Transverse colon (tissue), 4 donors: ENCODE measurements at regions of chr18 and their contacts with region 1.

Region 1: GRCh38 chr18:77000527-77000926 is 132.1 kb downstream of the MBP start:
- DNase-seq: peak; percentile 59
- H3K4me3 ChIP-seq: peak overlapping the region in 1 of 4 donors; percentile 25
- H3K27ac ChIP-seq: no peak overlapping the region
- H3K4me1 ChIP-seq: peaks cover 0 to 6% (median 2%) of the 10 kb centered on the region in 4 donors
- H3K27me3 ChIP-seq: no peaks in the 10 kb centered on the region
- CTCF ChIP-seq: peak; percentile 93 to 99 (median 97)
- EP300 ChIP-seq: no peak
- POLR2A ChIP-seq: no peak

Region 2: GRCh38 chr18:76410660-76411417 is 589.7 kb before region 1 on chr18:
- in situ Hi-C with region 1: no loop called
- intact Hi-C with region 1: loop called (anchors 5 kb)
- DNase-seq: no peak
- H3K4me3 ChIP-seq: no peak overlapping the region
- H3K27ac ChIP-seq: no peak overlapping the region
- H3K4me1 ChIP-seq: peaks cover 0 to 15% (median 4%) of the 10 kb centered on the region in 4 donors
- H3K27me3 ChIP-seq: no peaks in the 10 kb centered on the region
- CTCF ChIP-seq: no peak
- EP300 ChIP-seq: no peak
- POLR2A ChIP-seq: no peak

Region 3: GRCh38 chr18:76953583-76954233 is 46.8 kb before region 1 on chr18:
- in situ Hi-C with region 1: no loop called
- intact Hi-C with region 1: no loop called
- DNase-seq: peak; percentile 62
- H3K4me3 ChIP-seq: no peak overlapping the region
- H3K27ac ChIP-seq: peak overlapping the region in 3 of 4 donors; percentile 31 to 67 (median 46)
- H3K4me1 ChIP-seq: peaks cover 0 to 13% (median 10%) of the 10 kb centered on the region in 4 donors
- H3K27me3 ChIP-seq: no peaks in the 10 kb centered on the region
- CTCF ChIP-seq: no peak
- EP300 ChIP-seq: no peak
- POLR2A ChIP-seq: no peak

Region 4: DNA sequence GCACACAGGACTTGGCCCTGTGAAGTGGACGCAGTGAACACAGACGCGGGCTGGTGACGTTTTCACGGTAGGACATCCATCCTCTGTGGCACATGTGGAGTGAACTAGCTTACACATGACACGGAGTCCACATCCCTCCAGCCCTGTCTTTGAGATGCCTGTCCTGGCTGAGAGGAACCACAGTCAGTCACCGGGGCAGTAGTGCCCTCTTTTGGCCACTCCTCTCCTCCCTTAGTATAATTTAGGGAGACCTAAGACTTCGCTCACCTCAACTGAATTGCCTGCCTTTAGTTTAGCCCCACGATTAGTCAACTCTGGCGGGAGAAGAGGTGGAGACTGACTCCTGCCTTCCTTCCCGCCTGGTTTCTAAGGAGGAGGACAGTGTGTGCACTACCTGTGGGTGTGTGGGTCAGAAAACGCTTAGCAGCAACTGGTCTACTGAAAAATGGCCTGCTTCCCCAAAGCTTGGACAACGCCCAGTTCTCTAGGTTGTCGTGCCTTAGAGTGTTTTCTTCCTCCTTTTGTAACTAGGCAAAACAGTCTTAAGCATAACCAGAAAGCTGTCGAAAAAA is 61.5 kb after region 1 on chr18:
- in situ Hi-C with region 1: loop called in 1 of 4 experiments (anchors 10 kb)
- intact Hi-C with region 1: loop called (anchors 2 kb)
- DNase-seq: no peak
- H3K4me3 ChIP-seq: no peak overlapping the region
- H3K27ac ChIP-seq: peak overlapping the region; percentile 41 to 74 (median 46)
- H3K4me1 ChIP-seq: peaks cover 10 to 51% (median 13%) of the 10 kb centered on the region in 4 donors
- H3K27me3 ChIP-seq: no peaks in the 10 kb centered on the region
- CTCF ChIP-seq: no peak
- EP300 ChIP-seq: no peak
- POLR2A ChIP-seq: no peak

Region 5: GRCh38 chr18:77067291-77068061 is 66.9 kb after region 1 on chr18:
- in situ Hi-C with region 1: loop called in 1 of 4 experiments (anchors 10 kb)
- intact Hi-C with region 1: no loop called
- DNase-seq: peak; percentile 63
- H3K4me3 ChIP-seq: no peak overlapping the region
- H3K27ac ChIP-seq: peak overlapping the region; percentile 60 to 72 (median 70)
- H3K4me1 ChIP-seq: peaks cover 15 to 73% (median 18%) of the 10 kb centered on the region in 4 donors
- H3K27me3 ChIP-seq: no peaks in the 10 kb centered on the region
- CTCF ChIP-seq: no peak
- EP300 ChIP-seq: no peak
- POLR2A ChIP-seq: no peak

Region 6: DNA sequence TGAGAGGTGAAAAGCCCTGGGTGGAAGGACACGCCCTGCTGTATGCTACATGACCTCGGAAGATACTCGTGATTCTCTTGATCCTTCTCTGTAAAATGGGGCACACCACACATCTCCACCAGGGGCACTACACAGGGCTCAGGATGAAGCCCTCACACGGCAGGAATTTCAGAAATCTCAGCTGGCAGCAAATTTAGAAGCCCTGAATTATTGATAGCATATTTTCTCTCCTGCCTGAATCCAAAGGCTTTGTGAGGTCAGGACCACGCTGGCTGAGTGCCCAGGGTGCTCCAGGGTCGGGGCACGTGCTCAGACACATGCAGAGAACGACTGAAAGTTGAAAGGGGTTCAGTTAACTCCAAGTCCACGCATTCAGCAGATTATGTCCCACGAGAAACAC is 207.0 kb after region 1 on chr18:
- in situ Hi-C with region 1: loop called in 3 of 4 experiments (anchors 10 to 25 kb)
- intact Hi-C with region 1: loop called (anchors 5 kb)
- DNase-seq: peak; percentile 32
- H3K4me3 ChIP-seq: no peak overlapping the region
- H3K27ac ChIP-seq: peak overlapping the region; percentile 44 to 69 (median 67)
- H3K4me1 ChIP-seq: peaks cover 0 to 34% (median 5%) of the 10 kb centered on the region in 4 donors
- H3K27me3 ChIP-seq: no peaks in the 10 kb centered on the region
- CTCF ChIP-seq: peak in 4 of 5 experiments; percentile 41 to 47 (median 46)
- EP300 ChIP-seq: no peak
- POLR2A ChIP-seq: no peak

Region 7: GRCh38 chr18:77650799-77651385 is 650.4 kb after region 1 on chr18:
- in situ Hi-C with region 1: loop called in 2 of 4 experiments (anchors 25 kb)
- intact Hi-C with region 1: no loop called
- DNase-seq: peak; percentile 73
- H3K4me3 ChIP-seq: no peak overlapping the region
- H3K27ac ChIP-seq: no peak overlapping the region
- H3K4me1 ChIP-seq: peaks cover 0 to 6% (median 2%) of the 10 kb centered on the region in 4 donors
- H3K27me3 ChIP-seq: peaks cover 7% of the 10 kb centered on the region
- CTCF ChIP-seq: peak; percentile 79 to 94 (median 85)
- EP300 ChIP-seq: no peak
- POLR2A ChIP-seq: no peak